H1 (cell line): ENCODE measurements at regions of chr12 and their contacts with region 1.

Region 1: DNA sequence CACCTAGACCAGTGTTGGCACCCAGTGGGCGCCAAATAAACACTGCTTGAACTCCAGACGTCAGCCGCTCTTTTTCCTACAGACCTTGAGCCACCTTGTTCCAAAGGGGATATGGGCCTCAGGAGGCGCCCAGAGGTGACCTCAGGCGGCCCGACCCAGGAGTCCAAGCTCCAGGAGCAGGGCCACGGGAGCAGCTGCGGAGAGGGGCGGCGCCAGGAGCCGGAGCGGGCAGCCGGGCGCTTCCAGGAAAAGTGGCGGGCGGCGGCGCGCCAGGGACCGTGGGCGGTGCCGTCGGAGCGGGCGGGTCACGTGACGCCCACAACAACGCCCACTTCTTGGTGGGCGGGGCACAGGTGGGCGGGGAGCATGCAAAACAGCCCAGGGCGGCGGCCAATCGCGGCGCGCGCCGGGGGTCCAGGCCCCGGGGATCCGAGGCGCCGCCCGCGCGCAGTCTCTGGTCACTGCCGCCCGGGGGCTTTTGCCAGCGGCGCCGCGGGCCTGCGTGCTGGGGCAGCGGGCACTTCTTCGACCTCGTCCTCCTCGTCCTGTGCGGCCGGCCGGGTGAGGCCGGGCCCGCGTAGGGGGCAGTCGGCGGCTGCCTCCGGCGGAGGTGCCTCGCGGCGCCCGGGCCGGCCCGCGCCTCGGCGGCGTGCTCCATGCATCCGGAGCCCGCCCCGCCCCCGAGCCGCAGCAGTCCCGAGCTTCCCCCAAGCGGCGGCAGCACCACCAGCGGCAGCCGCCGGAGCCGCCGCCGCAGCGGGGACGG is at the start of gene ORAI1:
- DNase-seq: peak; percentile 73 to 98
- H3K4me3 ChIP-seq: peak within 1 kb of the TSS; percentile 61 to 93 (median 79)
- H3K27ac ChIP-seq: peak within 1 kb of the TSS; percentile 72
- H3K4me1 ChIP-seq: peaks cover 10 to 20% (median 14%) of the 10 kb centered on the region in 4 experiments
- H3K27me3 ChIP-seq: no peaks in the 10 kb centered on the region
- CTCF ChIP-seq: peak in 2 of 3 experiments; percentile 8 to 20; a peak in 1 of 4 replicates
- EP300 ChIP-seq: peak; percentile 27 to 53; a peak in 1 of 3 replicates
- POLR2A ChIP-seq: peak; percentile 55 to 69
- RAD21 ChIP-seq: peak in 1 of 2 experiments; percentile 5; a peak in 1 of 4 replicates
- total RNA-seq, gene ORAI1: 28.4 and 29.9 TPM in 2 replicates

Region 2: DNA sequence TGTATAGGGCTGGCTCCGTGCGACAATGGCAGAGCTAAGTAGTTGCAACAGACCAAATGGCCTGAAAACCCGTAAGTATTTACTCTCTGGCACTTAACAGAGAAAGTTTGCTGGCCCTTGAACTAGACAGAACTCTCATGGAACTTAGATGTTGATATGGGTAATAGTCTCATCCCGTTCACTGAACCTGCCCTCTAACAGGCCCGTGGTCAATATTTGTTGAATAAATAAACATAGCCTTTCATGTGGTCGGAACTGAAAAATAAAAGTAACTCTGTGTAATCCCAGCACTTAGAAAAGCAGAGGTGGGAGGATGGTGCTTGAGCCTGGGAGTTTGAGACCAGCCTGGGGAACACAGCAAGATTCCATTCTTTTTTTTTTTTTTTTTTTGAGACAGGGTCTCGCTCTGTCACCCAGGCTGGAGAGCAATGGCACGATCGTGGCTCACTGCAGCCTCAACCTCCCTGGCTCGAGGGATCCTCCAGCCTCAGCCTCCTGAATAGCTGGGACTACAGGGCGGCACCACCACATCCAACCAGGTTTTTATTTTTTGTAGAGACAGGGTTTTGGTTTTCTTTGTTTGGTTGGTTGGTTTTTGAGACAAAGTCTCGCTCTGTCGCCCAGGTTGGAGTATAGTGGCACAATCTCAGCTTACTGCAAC is 75.2 kb before region 1 on chr12:
- CTCF ChIA-PET with region 1: interaction called, 50 read pairs
- POLR2A ChIA-PET with region 1: interaction called, 7 read pairs
- DNase-seq: no peak
- H3K4me3 ChIP-seq: no peak overlapping the region
- H3K27ac ChIP-seq: no peak overlapping the region
- H3K4me1 ChIP-seq: peaks cover 0 to 3% (median 0%) of the 10 kb centered on the region in 4 experiments; a peak in 1 of 7 replicates
- H3K27me3 ChIP-seq: no peaks in the 10 kb centered on the region
- CTCF ChIP-seq: no peak
- EP300 ChIP-seq: no peak
- POLR2A ChIP-seq: no peak
- RAD21 ChIP-seq: no peak

Region 3: GRCh38 chr12:121579981-121580868 is 46.0 kb before region 1 on chr12:
- CTCF ChIA-PET with region 1: interaction called, 47 read pairs
- POLR2A ChIA-PET with region 1: interaction called, 374 read pairs
- DNase-seq: peak; percentile 54 to 83
- H3K4me3 ChIP-seq: peak overlapping the region; percentile 78 to 88 (median 84)
- H3K27ac ChIP-seq: peak overlapping the region; percentile 95
- H3K4me1 ChIP-seq: peaks cover 10 to 30% (median 22%) of the 10 kb centered on the region in 4 experiments
- H3K27me3 ChIP-seq: no peaks in the 10 kb centered on the region
- CTCF ChIP-seq: no peak
- EP300 ChIP-seq: no peak
- POLR2A ChIP-seq: peak in 1 of 2 experiments; percentile 66; a peak in 2 of 3 replicates
- RAD21 ChIP-seq: 0 out of 4 replicates have a peak, but pooled peaks of 1 of the 2 experiments have one; percentile 1

Region 4: DNA sequence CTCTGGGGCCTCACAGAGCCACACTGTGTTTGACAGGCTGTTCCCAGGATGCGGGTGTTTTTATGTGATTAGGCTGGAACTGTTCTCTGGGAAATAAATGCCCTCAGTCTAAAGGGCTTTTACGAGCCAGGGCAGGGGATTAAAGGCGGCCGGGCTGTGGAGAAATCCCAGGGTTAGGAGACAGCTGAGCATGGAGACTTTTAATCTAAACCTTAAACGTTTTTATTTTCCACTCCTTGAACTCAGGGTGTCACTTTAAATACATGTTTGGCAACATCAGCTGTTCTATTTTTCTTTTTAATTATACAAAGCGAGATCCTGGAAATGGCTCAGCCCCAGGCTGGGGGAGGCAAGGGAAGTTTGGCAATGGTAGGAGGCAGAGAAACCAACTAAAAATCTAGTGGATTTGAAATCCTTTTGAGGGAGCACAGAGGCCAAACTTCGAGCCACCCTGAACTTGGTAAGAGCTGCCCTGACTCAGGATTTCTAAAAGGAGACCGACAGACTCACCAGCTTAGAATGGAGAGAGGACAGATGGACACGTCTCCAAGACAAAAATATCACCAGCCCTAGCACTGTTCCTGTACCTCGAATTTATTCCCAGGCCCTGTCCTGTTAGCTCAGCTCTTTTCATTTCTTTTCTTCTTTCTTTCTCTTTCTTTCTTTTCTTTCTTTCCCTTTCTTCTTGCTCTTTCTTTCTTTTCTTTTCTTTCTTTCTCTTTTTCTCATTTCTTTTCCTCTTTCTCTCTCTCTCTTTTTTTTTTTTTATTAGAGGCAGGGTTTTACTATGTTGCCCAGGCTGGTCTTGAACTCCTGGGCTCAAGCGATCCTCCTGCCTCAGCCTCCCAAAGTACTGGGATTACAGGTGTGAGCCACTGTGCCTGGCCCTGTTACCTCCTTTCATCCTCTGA is 15.8 kb before region 1 on chr12:
- CTCF ChIA-PET with region 1: interaction called, 13 read pairs
- POLR2A ChIA-PET with region 1: interaction called, 21 read pairs
- DNase-seq: no peak
- H3K4me3 ChIP-seq: no peak overlapping the region
- H3K27ac ChIP-seq: no peak overlapping the region
- H3K4me1 ChIP-seq: peaks cover 0 to 6% (median 1%) of the 10 kb centered on the region in 4 experiments; a peak in 2 of 7 replicates
- H3K27me3 ChIP-seq: no peaks in the 10 kb centered on the region
- CTCF ChIP-seq: no peak
- EP300 ChIP-seq: no peak
- POLR2A ChIP-seq: no peak
- RAD21 ChIP-seq: no peak

Region 5: GRCh38 chr12:121649819-121650353 is 23.6 kb after region 1 on chr12:
- CTCF ChIA-PET with region 1: interaction called, 8 read pairs
- POLR2A ChIA-PET with region 1: interaction called, 14 read pairs
- DNase-seq: no peak
- H3K4me3 ChIP-seq: no peak overlapping the region
- H3K27ac ChIP-seq: no peak overlapping the region
- H3K4me1 ChIP-seq: peaks cover 0 to 5% (median 2%) of the 10 kb centered on the region in 4 experiments; a peak in 3 of 7 replicates
- H3K27me3 ChIP-seq: no peaks in the 10 kb centered on the region
- CTCF ChIP-seq: no peak
- EP300 ChIP-seq: no peak
- POLR2A ChIP-seq: no peak
- RAD21 ChIP-seq: no peak

Region 6: GRCh38 chr12:121668750-121669520 is 42.7 kb after region 1 on chr12:
- CTCF ChIA-PET with region 1: interaction called, 20 read pairs
- POLR2A ChIA-PET with region 1: interaction called, 29 read pairs
- DNase-seq: peak in 1 of 2 experiments; percentile 80
- H3K4me3 ChIP-seq: no peak overlapping the region
- H3K27ac ChIP-seq: no peak overlapping the region
- H3K4me1 ChIP-seq: peaks cover 0 to 18% (median 7%) of the 10 kb centered on the region in 4 experiments; a peak in 6 of 7 replicates
- H3K27me3 ChIP-seq: no peaks in the 10 kb centered on the region
- CTCF ChIP-seq: peak; percentile 52 to 62 (median 53)
- EP300 ChIP-seq: no peak
- POLR2A ChIP-seq: no peak
- RAD21 ChIP-seq: peak; percentile 52 to 70

Region 7: DNA sequence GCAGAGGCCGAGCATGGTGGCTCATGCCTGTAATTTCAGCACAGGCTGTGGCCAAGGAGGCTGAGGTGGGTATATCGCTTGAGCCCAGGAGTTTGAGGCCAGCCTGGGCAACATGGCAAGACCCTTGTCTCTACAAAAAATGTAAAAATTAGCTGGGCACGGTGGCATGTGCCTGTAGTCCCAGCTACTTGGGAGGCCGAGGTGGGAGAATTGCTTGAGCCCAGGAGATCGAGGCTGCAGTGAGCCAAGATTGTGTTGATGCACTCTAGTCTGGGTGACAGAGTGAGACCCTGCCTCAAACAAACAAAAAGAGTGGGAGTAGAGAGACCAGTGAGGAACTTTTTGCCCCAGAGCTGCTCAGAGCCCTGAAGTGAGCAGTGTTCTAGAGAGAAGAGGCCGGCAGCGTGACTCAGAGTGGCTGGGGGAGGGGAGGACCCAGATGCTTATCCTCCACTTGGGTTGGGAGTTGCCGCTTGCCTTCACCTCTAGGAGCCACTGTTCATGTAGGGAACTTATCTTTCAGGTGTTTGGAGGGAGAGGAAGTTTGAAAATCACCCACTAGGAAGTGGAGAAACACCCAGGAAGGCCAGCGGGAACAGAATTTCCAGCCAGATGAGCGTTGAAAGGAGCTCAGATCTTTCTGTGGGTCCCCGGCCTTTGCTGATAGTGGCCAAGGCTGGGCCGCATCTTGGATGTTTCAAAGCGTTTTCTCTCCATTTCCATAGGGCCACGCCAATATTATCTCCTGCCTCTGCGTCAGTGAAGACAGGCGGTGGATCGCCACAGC is 307.4 kb after region 1 on chr12:
- CTCF ChIA-PET with region 1: no interaction called
- POLR2A ChIA-PET with region 1: no interaction called
- DNase-seq: peak in 1 of 2 experiments; percentile 39
- H3K4me3 ChIP-seq: no peak overlapping the region
- H3K27ac ChIP-seq: no peak overlapping the region
- H3K4me1 ChIP-seq: peaks cover 2 to 12% (median 6%) of the 10 kb centered on the region in 4 experiments
- H3K27me3 ChIP-seq: no peaks in the 10 kb centered on the region
- CTCF ChIP-seq: peak; percentile 29 to 49 (median 38); a peak in 3 of 4 replicates
- EP300 ChIP-seq: no peak
- POLR2A ChIP-seq: no peak
- RAD21 ChIP-seq: peak in 1 of 2 experiments; percentile 53; a peak in 3 of 4 replicates